ENCODE measurements at regions of chr4 and their contacts with region 1.

Region 1: GRCh38 chr4:37603070-37603468 is 83.1 kb downstream of the RELL1 start:
- DNase-seq: peak; percentile 83
- H3K4me3 Mint-ChIP-seq: no peak overlapping the region
- H3K27ac Mint-ChIP-seq: no peak overlapping the region
- H3K4me1 Mint-ChIP-seq: peaks cover 8% of the 10 kb centered on the region
- H3K27me3 Mint-ChIP-seq: no peaks in the 10 kb centered on the region

Region 2: DNA sequence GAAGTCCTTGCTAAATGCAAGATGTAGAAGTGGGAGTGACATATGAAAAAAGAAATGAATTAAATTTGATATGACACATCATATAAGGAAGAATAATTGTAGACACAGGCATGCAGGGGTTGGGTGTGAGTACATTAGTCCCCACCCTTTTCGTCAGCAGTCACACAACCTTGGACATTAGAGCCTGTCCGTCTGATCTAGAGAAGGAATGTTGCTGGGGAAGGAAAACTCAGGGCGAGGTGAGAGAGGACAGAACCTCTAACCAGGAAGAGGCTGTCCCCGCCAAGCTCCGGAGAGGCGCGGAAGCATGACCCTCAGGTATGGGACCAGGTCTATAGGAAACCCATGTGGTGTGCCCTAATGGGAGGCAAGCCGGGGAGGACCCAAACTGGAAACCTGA is 19.0 kb before region 1 on chr4:
- CTCF ChIA-PET with region 1: no interaction called
- POLR2A ChIA-PET with region 1: no interaction called
- intact Hi-C with region 1: no loop called
- DNase-seq: no peak
- H3K4me3 Mint-ChIP-seq: no peak overlapping the region
- H3K27ac Mint-ChIP-seq: no peak overlapping the region
- H3K4me1 Mint-ChIP-seq: peaks cover 6% of the 10 kb centered on the region
- H3K27me3 Mint-ChIP-seq: peaks cover 27% of the 10 kb centered on the region

Region 3: DNA sequence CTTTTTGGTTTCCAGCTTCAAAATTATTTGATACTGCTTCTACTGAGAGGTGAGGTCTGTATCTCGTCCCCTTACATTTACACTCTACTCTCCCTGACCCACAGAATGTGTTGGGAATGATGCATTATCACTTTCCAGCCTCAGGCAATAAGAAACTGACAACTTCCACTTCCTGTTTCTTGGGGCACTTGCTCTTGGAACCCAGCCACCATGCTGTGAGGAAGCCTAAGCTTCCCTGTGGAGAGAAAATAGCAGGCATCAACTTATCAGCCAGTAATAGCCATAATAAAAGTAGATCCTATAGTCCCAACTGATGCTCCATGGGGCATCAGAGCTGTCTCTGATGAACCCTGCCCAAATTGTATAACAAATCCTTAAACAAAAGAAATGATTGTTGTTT is 50.5 kb after region 1 on chr4:
- CTCF ChIA-PET with region 1: interaction called, 12 read pairs
- POLR2A ChIA-PET with region 1: no interaction called
- intact Hi-C with region 1: no loop called
- DNase-seq: no peak
- H3K4me3 Mint-ChIP-seq: no peak overlapping the region
- H3K27ac Mint-ChIP-seq: no peak overlapping the region
- H3K4me1 Mint-ChIP-seq: peaks cover 12% of the 10 kb centered on the region
- H3K27me3 Mint-ChIP-seq: no peaks in the 10 kb centered on the region

Region 4: DNA sequence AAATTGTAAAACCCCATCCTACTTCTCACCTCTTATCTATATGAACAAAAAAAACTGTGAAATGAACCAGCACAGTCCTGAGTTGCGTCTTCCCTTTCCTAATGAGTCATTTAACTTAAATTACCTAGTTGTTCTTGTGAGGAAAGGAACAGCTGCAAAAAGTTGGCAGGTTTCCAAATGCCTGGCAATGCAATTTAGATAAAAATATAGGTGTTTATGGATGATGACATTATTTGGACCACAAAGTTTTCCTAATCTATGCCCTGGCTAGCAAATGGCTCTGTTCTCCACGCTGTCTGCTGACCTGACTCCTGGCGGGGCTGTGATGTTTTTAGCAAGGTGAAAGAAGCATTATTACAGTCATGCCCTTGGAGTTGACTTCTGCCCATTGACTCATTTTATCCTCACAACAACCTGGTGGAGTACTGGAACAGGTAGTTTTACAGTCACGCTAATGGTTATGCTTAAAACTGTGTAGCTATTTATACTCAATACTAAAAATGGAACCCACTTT is 112.9 kb after region 1 on chr4:
- CTCF ChIA-PET with region 1: no interaction called
- POLR2A ChIA-PET with region 1: no interaction called
- intact Hi-C with region 1: loop called (anchors 1 kb)
- DNase-seq: peak; percentile 57
- H3K4me3 Mint-ChIP-seq: no peak overlapping the region
- H3K27ac Mint-ChIP-seq: peak overlapping the region; percentile 81
- H3K4me1 Mint-ChIP-seq: peaks cover 20% of the 10 kb centered on the region
- H3K27me3 Mint-ChIP-seq: peaks cover 10% of the 10 kb centered on the region

Region 5: DNA sequence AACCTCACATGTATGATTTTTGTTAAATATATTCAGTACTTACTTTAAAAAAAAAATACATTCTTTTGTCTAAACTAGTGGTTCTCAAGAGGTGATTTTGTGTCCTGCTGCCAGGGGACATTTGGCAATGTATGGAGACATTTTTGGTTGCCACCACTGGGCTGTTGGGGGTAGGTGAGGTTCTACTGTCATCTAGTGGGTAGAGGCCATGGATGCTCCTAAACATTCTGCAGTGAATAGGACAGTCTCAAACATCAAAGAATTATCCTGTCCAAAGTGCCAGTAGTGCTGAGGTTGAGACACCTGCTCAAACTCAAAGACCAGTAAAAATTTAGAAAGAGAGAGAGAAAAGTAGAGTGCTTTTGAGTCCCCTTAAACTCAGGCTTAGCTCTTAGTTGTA is 190.5 kb after region 1 on chr4:
- CTCF ChIA-PET with region 1: interaction called, 17 read pairs
- POLR2A ChIA-PET with region 1: no interaction called
- intact Hi-C with region 1: no loop called
- DNase-seq: peak; percentile 12
- H3K4me3 Mint-ChIP-seq: no peak overlapping the region
- H3K27ac Mint-ChIP-seq: no peak overlapping the region
- H3K4me1 Mint-ChIP-seq: no peaks in the 10 kb centered on the region
- H3K27me3 Mint-ChIP-seq: peaks cover under 1% of the 10 kb centered on the region

Region 6: GRCh38 chr4:38574559-38575333 is 971.7 kb after region 1 on chr4:
- CTCF ChIA-PET with region 1: no interaction called
- POLR2A ChIA-PET with region 1: no interaction called
- intact Hi-C with region 1: no loop called
- DNase-seq: no peak
- H3K4me3 Mint-ChIP-seq: no peak overlapping the region
- H3K27ac Mint-ChIP-seq: no peak overlapping the region
- H3K4me1 Mint-ChIP-seq: no peaks in the 10 kb centered on the region
- H3K27me3 Mint-ChIP-seq: peaks cover 2% of the 10 kb centered on the region